Transverse colon (tissue), 4 donors: ENCODE measurements at regions of chr10 and their contacts with region 1.

Region 1: GRCh38 chr10:32893431-32893830 is 64.6 kb downstream of the ITGB1 start:
- DNase-seq: no peak
- H3K4me3 ChIP-seq: no peak overlapping the region
- H3K27ac ChIP-seq: no peak overlapping the region
- H3K4me1 ChIP-seq: no peaks in the 10 kb centered on the region
- H3K27me3 ChIP-seq: no peaks in the 10 kb centered on the region
- CTCF ChIP-seq: no peak
- EP300 ChIP-seq: no peak
- POLR2A ChIP-seq: no peak

Region 2: GRCh38 chr10:32028710-32029109 is 864.7 kb before region 1 on chr10:
- in situ Hi-C with region 1: no loop called
- intact Hi-C with region 1: loop called (anchors 5 kb)
- DNase-seq: no peak
- H3K4me3 ChIP-seq: no peak overlapping the region
- H3K27ac ChIP-seq: no peak overlapping the region
- H3K4me1 ChIP-seq: no peaks in the 10 kb centered on the region
- H3K27me3 ChIP-seq: no peaks in the 10 kb centered on the region
- CTCF ChIP-seq: no peak
- EP300 ChIP-seq: no peak
- POLR2A ChIP-seq: no peak